Esophagus squamous epithelium (tissue), 5 donors: ENCODE measurements at regions of chr19 and their contacts with region 1.

Region 1: DNA sequence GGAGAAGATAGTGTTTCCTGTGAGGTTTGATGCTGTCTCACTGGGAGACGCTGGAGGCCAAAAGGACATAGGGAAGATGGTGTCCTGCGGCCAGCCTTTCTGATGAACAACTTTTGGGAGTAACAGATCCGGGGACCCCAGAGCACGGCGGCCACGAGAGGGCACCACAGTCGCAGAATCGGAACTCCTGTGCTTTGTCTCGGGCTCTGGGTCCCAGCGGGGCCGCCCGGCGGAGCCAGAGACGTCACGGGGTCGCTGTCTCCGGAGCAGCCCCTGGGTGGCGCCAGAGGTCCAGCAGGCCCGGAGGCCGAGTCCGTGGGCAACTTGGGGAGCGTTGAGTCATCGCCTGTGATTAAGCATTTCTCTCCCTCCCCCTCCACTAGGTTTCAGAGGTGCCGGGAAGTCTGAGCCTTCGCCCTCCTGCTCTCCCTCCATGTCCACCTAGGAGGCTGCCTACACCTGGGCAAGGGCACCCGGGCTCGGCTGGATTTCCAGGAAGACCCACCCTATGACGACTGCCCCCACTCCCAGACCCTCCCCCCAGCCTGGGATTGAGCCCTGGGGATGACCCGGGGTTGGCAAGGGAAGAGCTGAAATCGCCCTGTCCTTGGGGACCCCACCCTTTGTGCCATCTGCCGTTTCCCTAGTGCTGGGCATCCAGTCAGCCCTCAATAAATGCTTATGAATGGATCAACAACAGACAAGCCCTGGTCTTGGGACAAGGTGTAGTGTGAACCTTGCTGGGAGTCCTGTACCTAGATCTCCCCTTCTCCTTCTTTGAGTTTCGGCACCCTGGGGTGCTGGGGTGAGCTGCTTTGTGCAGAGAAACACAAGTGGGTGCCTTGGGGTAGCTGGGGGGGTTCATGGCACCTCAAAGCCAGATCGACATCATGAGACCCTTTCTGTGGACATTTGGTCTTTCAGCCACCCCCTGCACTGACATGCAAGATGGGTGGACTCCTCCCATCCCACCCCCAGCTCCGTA is 3.4 kb downstream of the NANOS3 start:
- DNase-seq: peak; percentile 82
- H3K4me3 ChIP-seq: peak overlapping the region; percentile 19 to 56 (median 32)
- H3K27ac ChIP-seq: peak overlapping the region; percentile 89 to 95 (median 90)
- H3K4me1 ChIP-seq: peaks cover 20 to 60% (median 32%) of the 10 kb centered on the region in 3 donors
- H3K27me3 ChIP-seq: no peaks in the 10 kb centered on the region
- CTCF ChIP-seq: peak; percentile 96 to 100 (median 100)
- POLR2A ChIP-seq: peak in 1 of 4 donors; percentile 32

Region 2: GRCh38 chr19:14023404-14024235 is 143.3 kb after region 1 on chr19:
- intact Hi-C with region 1: no loop called
- DNase-seq: no peak
- H3K4me3 ChIP-seq: no peak overlapping the region
- H3K27ac ChIP-seq: peak overlapping the region in 2 of 4 donors; percentile 3 to 39
- H3K4me1 ChIP-seq: peaks cover 0 to 6% (median 0%) of the 10 kb centered on the region in 3 donors
- H3K27me3 ChIP-seq: peaks cover 0 to 9% (median 0%) of the 10 kb centered on the region in 4 donors
- CTCF ChIP-seq: peak in 4 of 6 experiments; percentile 18 to 37 (median 34)
- POLR2A ChIP-seq: no peak

Region 3: DNA sequence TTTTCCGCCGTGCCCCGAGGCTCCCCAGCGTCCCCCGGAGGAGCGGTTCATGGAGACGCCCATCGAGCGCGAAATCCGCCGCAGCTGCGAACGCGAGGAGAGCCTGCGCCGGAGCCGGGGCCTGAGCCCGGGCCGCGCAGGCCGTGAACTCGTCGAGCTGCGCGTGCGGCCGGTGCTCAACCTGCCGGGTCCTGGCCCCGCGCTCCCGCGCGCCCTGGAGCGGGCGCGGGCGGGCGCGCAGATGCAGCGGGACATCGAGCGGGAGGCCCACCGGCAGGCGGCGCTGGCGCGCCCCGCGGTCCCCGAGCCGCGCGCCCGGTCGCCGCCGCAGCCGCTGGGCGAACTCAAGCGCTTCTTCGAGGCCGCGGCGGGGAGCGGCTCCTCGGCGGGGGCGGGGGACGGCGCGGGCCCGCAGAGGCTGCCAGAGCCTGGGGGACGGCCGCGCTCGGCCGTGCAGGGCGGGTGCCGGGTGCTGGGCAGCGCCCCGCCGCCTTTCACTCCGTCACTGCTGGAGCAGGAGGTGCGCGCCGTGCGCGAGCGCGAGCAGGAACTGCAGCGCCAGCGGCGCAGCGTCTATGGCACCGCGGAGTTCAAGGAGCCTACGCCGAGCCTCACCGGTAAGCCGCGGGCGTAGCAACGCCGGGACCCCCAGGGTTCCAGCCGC is 193.0 kb after region 1 on chr19:
- intact Hi-C with region 1: loop called (anchors 10 kb)
- DNase-seq: no peak
- H3K4me3 ChIP-seq: peak overlapping the region; percentile 52 to 78 (median 72)
- H3K27ac ChIP-seq: peak overlapping the region; percentile 91 to 97 (median 95)
- H3K4me1 ChIP-seq: peaks cover 21 to 41% (median 22%) of the 10 kb centered on the region in 3 donors
- H3K27me3 ChIP-seq: no peaks in the 10 kb centered on the region
- CTCF ChIP-seq: peak in 4 of 6 experiments; percentile 66 to 92 (median 82)
- POLR2A ChIP-seq: peak in 2 of 4 donors; percentile 51 to 67